ENCODE measurements at regions of chr5 and their contacts with region 1.

Region 1: GRCh38 chr5:138953387-138954256 is 78.5 kb upstream of the LRRTM2 start:
- DNase-seq: peak; percentile 92
- H3K4me3 ChIP-seq: no peak overlapping the region
- H3K27ac ChIP-seq: peak overlapping the region; percentile 61 to 78
- H3K4me1 ChIP-seq: peaks cover 14% of the 10 kb centered on the region
- H3K27me3 ChIP-seq: no peaks in the 10 kb centered on the region
- CTCF ChIP-seq: no peak
- POLR2A ChIP-seq: no peak

Region 2: GRCh38 chr5:139022528-139022927 is 68.9 kb after region 1 on chr5:
- intact Hi-C with region 1: no loop called
- DNase-seq: peak; percentile 57
- H3K4me3 ChIP-seq: no peak overlapping the region
- H3K27ac ChIP-seq: no peak overlapping the region
- H3K4me1 ChIP-seq: no peaks in the 10 kb centered on the region
- H3K27me3 ChIP-seq: no peaks in the 10 kb centered on the region
- CTCF ChIP-seq: no peak
- POLR2A ChIP-seq: no peak

Region 3: GRCh38 chr5:139075066-139076050 is 121.7 kb after region 1 on chr5:
- intact Hi-C with region 1: loop called (anchors 10 kb)
- DNase-seq: no peak
- H3K4me3 ChIP-seq: no peak overlapping the region
- H3K27ac ChIP-seq: no peak overlapping the region
- H3K4me1 ChIP-seq: no peaks in the 10 kb centered on the region
- H3K27me3 ChIP-seq: no peaks in the 10 kb centered on the region
- CTCF ChIP-seq: no peak
- POLR2A ChIP-seq: no peak